ENCODE measurements at regions of chr3 and their contacts with region 1.

Region 1: GRCh38 chr3:169133178-169134161 is 530.0 kb downstream of the MECOM start:
- DNase-seq: peak; percentile 63
- ATAC-seq: peak; percentile 67
- H3K4me3 ChIP-seq: no peak overlapping the region
- H3K27ac ChIP-seq: no peak overlapping the region; the same call in 1 of the 2 replicates
- H3K4me1 ChIP-seq: peaks cover 23% of the 10 kb centered on the region
- H3K27me3 ChIP-seq: no peaks in the 10 kb centered on the region
- CTCF ChIP-seq: peak; percentile 80

Region 2: GRCh38 chr3:168839653-168840052 is 293.8 kb before region 1 on chr3:
- CTCF ChIA-PET with region 1: no interaction called
- POLR2A ChIA-PET with region 1: no interaction called
- intact Hi-C with region 1: no loop called
- DNase-seq: no peak
- ATAC-seq: no peak
- H3K4me3 ChIP-seq: no peak overlapping the region
- H3K27ac ChIP-seq: no peak overlapping the region
- H3K4me1 ChIP-seq: no peaks in the 10 kb centered on the region
- H3K27me3 ChIP-seq: peaks cover 20% of the 10 kb centered on the region
- CTCF ChIP-seq: no peak

Region 3: GRCh38 chr3:168952551-168952950 is 180.9 kb before region 1 on chr3:
- CTCF ChIA-PET with region 1: no interaction called
- POLR2A ChIA-PET with region 1: no interaction called
- intact Hi-C with region 1: loop called (anchors 2 kb)
- DNase-seq: peak; percentile 73
- ATAC-seq: peak; percentile 47
- H3K4me3 ChIP-seq: no peak overlapping the region
- H3K27ac ChIP-seq: peak overlapping the region; percentile 89
- H3K4me1 ChIP-seq: peaks cover 34% of the 10 kb centered on the region
- H3K27me3 ChIP-seq: no peaks in the 10 kb centered on the region
- CTCF ChIP-seq: peak; percentile 73

Region 4: GRCh38 chr3:169041677-169042171 is 91.7 kb before region 1 on chr3:
- CTCF ChIA-PET with region 1: no interaction called
- POLR2A ChIA-PET with region 1: no interaction called
- intact Hi-C with region 1: loop called (anchors 5 kb)
- DNase-seq: peak; percentile 64
- ATAC-seq: 0 out of 2 replicates have a peak, but pooled peaks have one; percentile 9
- H3K4me3 ChIP-seq: peak overlapping the region; percentile 24; the same call in 1 of the 2 replicates
- H3K27ac ChIP-seq: no peak overlapping the region
- H3K4me1 ChIP-seq: peaks cover 33% of the 10 kb centered on the region
- H3K27me3 ChIP-seq: no peaks in the 10 kb centered on the region
- CTCF ChIP-seq: peak; percentile 81

Region 5: DNA sequence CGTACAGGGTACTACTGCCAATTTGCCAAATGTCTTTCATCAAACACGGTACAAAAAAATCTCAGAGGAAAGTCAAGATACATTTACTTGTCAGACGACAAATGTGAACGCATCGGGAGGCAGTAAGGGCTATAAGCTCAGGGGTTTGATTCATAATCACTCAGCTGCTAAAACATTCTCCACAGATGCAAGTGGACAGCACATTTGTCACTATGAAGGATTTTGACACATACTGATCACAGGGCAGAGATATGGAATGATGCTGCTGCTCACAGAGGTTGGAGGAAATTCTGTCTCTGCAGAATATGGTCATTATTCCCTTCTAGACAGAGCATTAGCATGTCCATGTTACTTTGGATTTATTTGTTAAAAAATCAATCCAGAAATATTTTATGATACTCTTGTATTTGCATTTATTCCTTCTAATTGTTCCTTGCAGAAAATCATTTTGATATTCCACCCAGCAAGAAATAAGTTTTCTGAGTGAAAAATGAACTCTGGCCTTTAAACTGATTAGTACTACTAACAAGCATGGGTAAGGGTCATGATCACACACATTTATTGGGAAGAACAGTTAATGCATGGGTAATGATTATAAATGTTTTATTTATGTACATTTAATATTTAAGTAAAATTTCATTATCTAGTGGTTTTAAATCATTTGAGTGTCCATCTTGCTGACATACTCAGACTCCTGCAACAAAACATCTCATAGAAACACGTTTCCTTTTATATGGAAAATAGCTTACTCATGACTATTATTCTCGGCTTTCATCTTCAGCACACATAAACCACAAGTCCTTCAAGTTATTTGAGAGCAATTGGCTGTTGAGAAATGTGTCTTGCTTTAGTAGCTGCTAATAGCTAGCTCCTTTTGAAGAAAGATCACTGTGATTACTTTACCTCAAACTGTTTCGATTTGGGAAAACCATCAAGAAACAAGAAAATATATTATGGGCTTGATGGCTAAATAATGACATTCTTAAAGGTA is 29.2 kb before region 1 on chr3:
- CTCF ChIA-PET with region 1: no interaction called
- POLR2A ChIA-PET with region 1: no interaction called
- intact Hi-C with region 1: no loop called
- DNase-seq: peak; percentile 67
- ATAC-seq: peak; percentile 34
- H3K4me3 ChIP-seq: no peak overlapping the region
- H3K27ac ChIP-seq: no peak overlapping the region
- H3K4me1 ChIP-seq: peaks cover 35% of the 10 kb centered on the region
- H3K27me3 ChIP-seq: no peaks in the 10 kb centered on the region
- CTCF ChIP-seq: no peak

Region 6: GRCh38 chr3:169509359-169509758 is 375.9 kb after region 1 on chr3:
- CTCF ChIA-PET with region 1: no interaction called
- POLR2A ChIA-PET with region 1: no interaction called
- intact Hi-C with region 1: loop called (anchors 5 kb)
- DNase-seq: no peak
- ATAC-seq: no peak; the same call in 1 of the 2 replicates
- H3K4me3 ChIP-seq: no peak overlapping the region
- H3K27ac ChIP-seq: no peak overlapping the region
- H3K4me1 ChIP-seq: no peaks in the 10 kb centered on the region
- H3K27me3 ChIP-seq: no peaks in the 10 kb centered on the region
- CTCF ChIP-seq: no peak

Region 7: GRCh38 chr3:169744366-169745054 is 611.0 kb after region 1 on chr3:
- CTCF ChIA-PET with region 1: no interaction called
- POLR2A ChIA-PET with region 1: no interaction called
- intact Hi-C with region 1: loop called (anchors 5 kb)
- DNase-seq: peak; percentile 66
- ATAC-seq: 0 out of 2 replicates have a peak, but pooled peaks have one; percentile 39
- H3K4me3 ChIP-seq: no peak overlapping the region
- H3K27ac ChIP-seq: no peak overlapping the region
- H3K4me1 ChIP-seq: peaks cover 20% of the 10 kb centered on the region
- H3K27me3 ChIP-seq: no peaks in the 10 kb centered on the region
- CTCF ChIP-seq: peak; percentile 83

Measured in PC-3 (cell line).